A549 (cell line): ENCODE measurements at regions of chr12 and their contacts with region 1.

Region 1: DNA sequence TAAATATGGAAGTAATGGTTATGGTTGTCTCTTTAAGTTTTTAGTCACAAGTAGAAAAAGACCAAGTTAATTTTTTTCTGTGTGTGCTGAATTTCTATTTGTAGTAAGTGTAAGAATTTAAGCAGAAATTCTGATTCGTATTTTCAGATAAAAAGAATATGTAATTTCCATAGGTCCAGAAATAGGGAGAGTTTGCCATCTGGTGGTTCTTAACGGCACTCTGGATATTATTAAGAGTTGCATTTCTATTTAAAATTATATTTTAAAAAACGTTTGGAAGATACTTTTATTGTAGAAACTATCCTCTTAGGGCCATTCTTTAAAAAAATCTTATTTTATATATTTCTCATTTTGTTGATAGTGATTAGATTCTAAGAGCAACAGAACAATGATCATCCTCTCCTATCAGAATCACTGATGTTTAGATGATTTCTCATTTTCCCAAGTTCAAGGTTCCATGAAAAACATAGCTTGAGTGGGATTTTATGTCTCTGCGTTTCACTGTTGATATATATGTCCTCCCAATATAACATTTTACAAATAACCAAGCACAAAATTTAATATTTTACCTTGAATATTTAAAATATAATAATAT is 88.3 kb downstream of the LRRK2 start:
- DNase-seq: peak; percentile 13 to 49
- ATAC-seq: 0 out of 6 replicates have a peak, but pooled peaks of 1 of the 2 experiments have one; percentile 50
- H3K4me3 ChIP-seq: no peak overlapping the region
- H3K27ac ChIP-seq: peak overlapping the region in 1 of 2 experiments; percentile 20; a peak in 1 of 6 replicates
- H3K4me1 ChIP-seq: peaks cover 9% of the 10 kb centered on the region; the same call in 2 of the 3 replicates
- CTCF ChIP-seq: peak; percentile 90
- EP300 ChIP-seq: no peak
- POLR2A ChIP-seq: no peak
- RAD21 ChIP-seq: peak; percentile 90 to 96

Region 2: GRCh38 chr12:40152783-40153383 is 160.2 kb before region 1 on chr12:
- CTCF ChIA-PET with region 1: interaction called, 33 read pairs
- POLR2A ChIA-PET with region 1: no interaction called
- DNase-seq: peak in 1 of 2 experiments; percentile 65
- ATAC-seq: peak; percentile 43 to 75; a peak in 3 of 6 replicates
- H3K4me3 ChIP-seq: no peak overlapping the region
- H3K27ac ChIP-seq: no peak overlapping the region
- H3K4me1 ChIP-seq: peaks cover 12% of the 10 kb centered on the region; the same call in 2 of the 3 replicates
- CTCF ChIP-seq: peak; percentile 94
- EP300 ChIP-seq: no peak
- POLR2A ChIP-seq: no peak
- RAD21 ChIP-seq: peak; percentile 84 to 86

Region 3: DNA sequence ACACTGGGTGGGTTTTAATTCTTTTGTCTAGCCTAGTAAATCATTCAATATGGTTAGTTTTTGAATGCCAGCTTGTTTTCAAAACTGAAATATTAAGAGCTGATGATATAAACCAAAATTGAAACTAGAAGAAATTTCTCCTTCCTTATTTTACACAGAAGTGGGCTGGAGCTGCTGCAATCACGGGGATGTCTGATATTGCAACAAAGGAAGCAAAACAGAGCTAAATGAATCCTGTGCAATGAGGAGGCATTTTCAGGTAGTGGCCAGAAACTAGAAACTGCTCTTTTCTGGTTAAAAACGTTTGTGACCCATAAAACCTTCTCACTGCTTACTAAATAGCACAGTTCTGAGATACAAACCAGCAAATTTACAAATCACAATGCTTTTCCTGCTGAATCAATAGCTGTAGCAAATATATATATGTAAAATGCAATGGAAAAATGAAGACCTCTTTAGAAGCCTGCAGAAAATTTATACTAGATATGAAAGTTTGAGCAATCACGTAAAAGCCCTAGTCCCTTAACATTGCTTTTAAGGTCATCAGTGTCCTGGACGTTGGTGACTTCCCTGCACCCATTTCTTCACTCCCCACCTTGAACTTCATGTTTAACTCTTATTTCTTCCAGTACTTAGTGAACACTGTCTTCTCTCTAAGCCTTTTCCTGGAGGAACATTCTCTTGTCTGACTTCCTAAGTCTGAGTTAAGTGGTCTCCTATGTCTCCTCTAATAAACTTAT is 104.2 kb before region 1 on chr12:
- CTCF ChIA-PET with region 1: no interaction called
- POLR2A ChIA-PET with region 1: no interaction called
- DNase-seq: no peak
- ATAC-seq: peak in 1 of 2 experiments; percentile 27; a peak in 2 of 6 replicates
- H3K4me3 ChIP-seq: no peak overlapping the region
- H3K27ac ChIP-seq: peak overlapping the region in 1 of 2 experiments; percentile 8; a peak in 1 of 6 replicates
- H3K4me1 ChIP-seq: peaks cover 37% of the 10 kb centered on the region
- CTCF ChIP-seq: no peak
- EP300 ChIP-seq: no peak
- POLR2A ChIP-seq: no peak
- RAD21 ChIP-seq: no peak

Region 4: DNA sequence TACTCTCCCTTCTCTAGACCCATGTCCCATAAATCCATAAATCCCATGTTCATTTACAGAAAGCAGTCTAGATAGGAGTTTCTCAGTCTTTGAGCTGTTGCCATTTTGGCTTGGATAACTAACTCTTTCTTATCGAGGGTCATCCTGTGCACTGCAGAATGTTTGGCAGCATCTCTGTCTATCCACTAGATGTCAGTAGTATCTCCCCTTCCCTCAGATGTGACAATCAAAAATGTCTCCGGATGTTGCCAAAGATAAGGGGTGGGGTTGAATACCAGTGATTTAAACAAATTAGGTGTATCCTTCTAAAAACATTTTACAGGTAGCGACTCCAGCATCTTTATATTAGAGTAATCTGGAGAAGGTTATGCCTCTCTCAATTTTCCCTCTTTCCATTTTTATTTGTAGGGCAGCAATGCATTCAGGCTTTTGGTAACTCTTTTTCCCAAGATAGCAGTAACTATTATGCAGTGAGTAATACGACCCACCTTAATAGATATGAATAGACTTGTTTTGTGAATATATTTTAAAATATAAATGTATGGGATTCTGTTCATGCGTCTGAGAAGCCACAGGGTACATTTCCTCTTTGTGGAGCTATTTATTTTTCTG is 12.4 kb after region 1 on chr12:
- CTCF ChIA-PET with region 1: interaction called, 20 read pairs
- POLR2A ChIA-PET with region 1: no interaction called
- DNase-seq: peak; percentile 63 to 75
- ATAC-seq: peak; percentile 93 to 98
- H3K4me3 ChIP-seq: peak overlapping the region; percentile 12; the same call in 1 of the 3 replicates
- H3K27ac ChIP-seq: 0 out of 6 replicates have a peak overlapping the region, but pooled peaks have one; percentile 6 to 36
- H3K4me1 ChIP-seq: no peaks in the 10 kb centered on the region
- CTCF ChIP-seq: peak; percentile 64
- EP300 ChIP-seq: no peak
- POLR2A ChIP-seq: no peak
- RAD21 ChIP-seq: peak; percentile 53 to 63; a peak in 4 of 5 replicates